MCF 10A (cell line): ENCODE measurements at regions of chr1 and their contacts with region 1.

Region 1: DNA sequence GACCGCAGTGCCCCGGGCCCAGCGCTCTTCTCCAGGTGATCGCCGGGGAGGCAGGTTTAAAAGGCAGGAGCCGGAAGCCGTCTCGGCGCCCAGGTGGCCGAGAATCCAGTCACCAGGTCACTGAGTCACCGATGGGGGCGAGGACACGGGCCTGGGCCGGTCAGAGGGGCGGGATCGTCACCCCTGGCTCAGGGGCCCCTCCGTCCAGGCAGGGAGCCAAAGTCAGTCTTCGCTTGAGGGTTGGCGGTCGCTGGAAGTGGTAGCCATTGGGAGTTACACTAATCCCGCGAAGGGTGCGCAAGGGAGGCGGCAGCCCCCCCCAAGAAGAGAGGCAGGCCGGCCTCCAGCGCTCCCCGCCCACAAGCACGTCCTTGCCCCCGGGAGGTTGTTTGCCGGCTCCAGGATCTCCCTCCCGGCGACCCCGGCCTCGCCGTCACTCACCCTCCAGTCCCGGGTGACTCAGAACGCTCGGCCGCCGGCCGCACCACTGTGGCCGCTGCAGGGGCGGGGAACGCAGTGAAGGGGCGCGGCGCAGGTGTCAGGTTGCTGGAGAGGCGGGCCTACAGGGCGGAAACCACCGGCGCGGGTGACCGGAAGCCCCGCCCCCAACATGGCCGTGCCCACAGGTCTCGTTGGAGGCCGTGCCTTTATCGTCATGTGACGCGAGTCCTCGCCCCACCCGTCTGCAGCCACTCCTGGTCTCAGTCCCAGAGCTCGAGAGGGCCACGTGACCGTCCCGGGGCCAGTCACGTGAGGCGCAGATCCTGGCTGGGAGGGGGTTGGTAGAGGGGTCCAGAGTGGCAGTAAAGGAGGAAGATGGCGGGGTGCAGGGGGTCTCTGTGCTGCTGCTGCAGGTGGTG is at the starts of genes CLCN6 and MTHFR:
- DNase-seq: peak; percentile 99
- H3K4me3 Mint-ChIP-seq: peak within 1 kb of the TSS; percentile 95
- H3K27ac Mint-ChIP-seq: peak within 1 kb of the TSS; percentile 96
- H3K4me1 Mint-ChIP-seq: peaks cover 34% of the 10 kb centered on the region
- H3K27me3 Mint-ChIP-seq: no peaks in the 10 kb centered on the region
- CTCF ChIP-seq: no peak
- total RNA-seq, gene CLCN6: 12.3 and 24.7 TPM in 2 replicates
- total RNA-seq, gene MTHFR: 14.0 and 17.8 TPM in 2 replicates

Region 2: DNA sequence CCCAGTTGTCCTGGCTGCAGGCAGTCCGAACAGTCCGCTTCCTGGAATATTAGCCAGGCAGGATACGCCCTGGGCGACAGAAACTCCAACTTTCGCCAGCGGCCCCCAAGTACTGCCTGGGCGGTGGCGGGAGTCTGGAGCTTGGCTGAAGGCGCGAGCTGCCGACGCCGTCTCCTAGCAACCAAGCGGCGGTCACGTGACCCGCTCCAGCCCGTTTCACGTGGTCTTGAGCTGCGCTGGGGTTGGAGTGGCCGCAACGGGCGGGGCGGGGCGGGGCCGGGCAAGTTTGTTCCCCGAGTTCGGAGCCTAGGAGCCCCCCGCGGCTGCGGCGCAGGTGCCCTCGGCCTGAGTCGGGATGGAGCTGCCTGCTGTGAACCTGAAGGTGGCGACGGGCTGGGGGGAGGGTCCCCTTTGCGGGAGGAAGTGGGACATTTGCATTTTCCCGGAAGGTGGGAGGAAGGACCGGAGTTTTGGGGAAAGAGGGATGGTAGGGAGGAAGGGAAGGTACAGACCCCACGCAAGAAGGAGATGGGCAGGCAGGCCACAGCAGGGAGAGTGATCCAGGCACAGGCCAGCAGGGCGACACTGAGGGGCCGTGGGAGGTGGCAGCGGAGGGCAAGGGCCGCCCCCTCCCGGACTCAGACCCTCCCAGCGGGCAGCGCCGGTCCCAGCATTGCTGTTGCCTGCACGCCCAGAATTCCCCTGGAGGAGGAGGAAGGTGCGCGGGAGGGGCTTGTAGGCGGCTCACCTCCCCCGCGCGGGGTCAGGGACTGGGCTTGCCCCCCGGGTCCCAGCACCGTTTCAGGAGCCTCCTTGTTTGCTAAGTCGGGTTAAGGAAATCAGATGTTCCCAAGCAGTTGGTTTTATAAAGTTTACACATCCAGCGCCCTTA is 69.6 kb before region 1 on chr1 and contains the start of gene AGTRAP:
- CTCF ChIA-PET with region 1: no interaction called
- POLR2A ChIA-PET with region 1: interaction called, 63 read pairs
- intact Hi-C with region 1: loop called (anchors 1 kb)
- DNase-seq: peak; percentile 89
- H3K4me3 Mint-ChIP-seq: peak within 1 kb of the TSS; percentile 97
- H3K27ac Mint-ChIP-seq: peak within 1 kb of the TSS; percentile 98
- H3K4me1 Mint-ChIP-seq: peaks cover 7% of the 10 kb centered on the region
- H3K27me3 Mint-ChIP-seq: no peaks in the 10 kb centered on the region
- CTCF ChIP-seq: no peak
- total RNA-seq, gene AGTRAP: 68.4 and 73.1 TPM in 2 replicates

Region 3: DNA sequence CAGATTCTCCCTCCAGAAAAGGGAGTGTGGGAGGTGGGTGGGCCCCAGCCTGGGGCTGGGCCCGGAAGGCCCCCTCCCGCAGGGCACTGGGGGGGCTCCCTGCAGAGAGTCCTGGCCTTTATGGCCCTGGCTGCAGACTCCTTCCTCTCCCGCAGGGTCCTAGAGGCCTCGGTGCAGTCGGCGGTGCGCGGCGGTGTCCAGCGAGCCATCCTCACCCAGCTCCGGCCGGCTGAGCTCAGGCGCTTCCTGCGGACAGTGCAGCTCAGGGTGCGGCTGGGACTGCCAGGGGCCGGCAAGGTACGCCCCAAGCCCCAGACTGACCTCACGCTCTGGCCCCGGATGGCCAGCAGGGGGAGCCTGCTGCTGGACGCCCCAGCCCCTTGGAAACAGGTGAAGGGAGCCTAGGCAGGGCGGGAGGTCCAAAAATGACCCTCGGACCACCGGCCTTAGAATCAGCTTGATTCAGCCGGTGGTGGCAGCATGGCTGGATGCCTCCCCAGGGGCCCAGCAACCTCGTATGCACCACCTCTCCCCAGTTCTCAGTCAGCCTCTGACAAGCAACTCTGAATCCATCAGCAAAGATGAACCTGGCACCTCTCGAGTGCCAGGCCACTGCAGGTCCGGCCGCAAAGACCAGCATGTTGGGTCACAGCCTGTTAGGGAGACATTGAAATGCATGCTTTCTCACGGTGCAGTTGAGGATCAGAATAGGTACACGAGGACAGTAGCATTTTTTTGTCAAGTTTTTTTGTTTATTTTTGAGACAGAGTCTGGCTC is 20.5 kb before region 1 on chr1:
- CTCF ChIA-PET with region 1: interaction called, 8 read pairs
- POLR2A ChIA-PET with region 1: interaction called, 87 read pairs
- intact Hi-C with region 1: loop called (anchors 2 kb)
- DNase-seq: peak; percentile 69
- H3K4me3 Mint-ChIP-seq: no peak overlapping the region
- H3K27ac Mint-ChIP-seq: no peak overlapping the region
- H3K4me1 Mint-ChIP-seq: peaks cover under 1% of the 10 kb centered on the region
- H3K27me3 Mint-ChIP-seq: no peaks in the 10 kb centered on the region
- CTCF ChIP-seq: peak; percentile 87

Region 4: DNA sequence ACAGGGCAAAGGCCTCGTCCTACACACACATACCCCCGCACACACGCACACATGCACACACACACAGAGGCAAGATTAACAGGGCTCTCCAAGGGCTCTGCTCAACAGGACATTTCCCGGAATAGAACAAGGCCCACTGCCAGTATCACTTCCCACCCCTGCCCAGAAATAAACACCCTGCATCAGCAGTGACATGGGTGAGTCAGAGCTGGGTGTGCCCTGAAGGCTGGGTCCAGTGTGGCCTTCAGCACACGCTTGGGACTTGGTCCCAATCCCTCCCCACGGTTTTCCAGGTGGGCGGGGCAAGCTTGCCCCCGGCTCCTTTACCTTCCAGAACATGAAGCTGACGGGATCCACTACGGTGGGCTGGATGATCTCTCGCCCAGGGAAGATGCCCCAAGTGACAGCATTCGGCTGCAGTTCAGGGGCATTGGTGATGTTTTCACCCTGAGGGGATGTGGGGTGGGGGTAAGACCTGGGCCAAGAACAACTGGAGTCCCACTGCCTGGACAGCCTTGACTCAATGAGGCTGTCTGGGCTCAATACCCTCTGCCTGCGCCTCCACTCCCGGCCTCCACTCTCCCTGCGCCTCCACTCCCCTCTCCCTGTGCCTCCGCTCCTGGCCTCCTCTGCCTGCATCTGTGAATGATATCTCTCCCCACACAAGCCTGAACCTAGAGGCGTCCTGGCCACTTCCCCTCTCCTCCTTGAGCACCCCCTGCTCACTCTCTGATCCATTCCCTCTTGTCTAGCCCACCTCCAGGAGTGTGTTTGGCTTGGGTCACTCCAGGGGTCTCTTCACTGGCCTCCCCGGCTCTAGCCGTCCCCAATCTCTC is 14.6 kb before region 1 on chr1:
- CTCF ChIA-PET with region 1: interaction called, 8 read pairs
- POLR2A ChIA-PET with region 1: interaction called, 87 read pairs
- intact Hi-C with region 1: loop called (anchors 2 kb)
- DNase-seq: peak; percentile 97
- H3K4me3 Mint-ChIP-seq: peak overlapping the region; percentile 53
- H3K27ac Mint-ChIP-seq: peak overlapping the region; percentile 96
- H3K4me1 Mint-ChIP-seq: peaks cover 20% of the 10 kb centered on the region
- H3K27me3 Mint-ChIP-seq: no peaks in the 10 kb centered on the region
- CTCF ChIP-seq: no peak